CD14-positive monocyte (primary cell): ENCODE measurements at regions of chr17 and their contacts with region 1.

Region 1: GRCh38 chr17:76726231-76726775 is at the start of gene JMJD6:
- DNase-seq: peak; percentile 91 to 97 (median 94)
- H3K4me3 ChIP-seq: peak within 1 kb of the TSS; percentile 91 to 97 (median 92)
- H3K4me3 Mint-ChIP-seq: peak within 1 kb of the TSS; percentile 92 to 95
- H3K27ac ChIP-seq: peak within 1 kb of the TSS; percentile 98
- H3K27ac Mint-ChIP-seq: peak within 1 kb of the TSS; percentile 94 to 98 (median 97)
- H3K4me1 ChIP-seq: peaks cover 28 to 32% of the 10 kb centered on the region in 2 donors
- H3K4me1 Mint-ChIP-seq: peaks cover 37% of the 10 kb centered on the region
- H3K27me3 ChIP-seq: no peaks in the 10 kb centered on the region
- H3K27me3 Mint-ChIP-seq: peaks cover 0 to 2% (median 0%) of the 10 kb centered on the region in 3 donors
- CTCF ChIP-seq: no peak
- polyA plus RNA-seq, gene JMJD6: 24.6 to 75.0 (median 26.2) TPM

Region 2: GRCh38 chr17:76671123-76671911 is 55.0 kb before region 1 on chr17:
- intact Hi-C with region 1: loop called (anchors 5 to 10 kb)
- DNase-seq: peak; percentile 99 to 100 (median 100)
- H3K4me3 ChIP-seq: peak overlapping the region; percentile 66 to 90 (median 87)
- H3K4me3 Mint-ChIP-seq: peak overlapping the region; percentile 81 to 94
- H3K27ac ChIP-seq: peak overlapping the region; percentile 64 to 86
- H3K27ac Mint-ChIP-seq: peak overlapping the region; percentile 82 to 96 (median 92)
- H3K4me1 ChIP-seq: peaks cover 12 to 15% of the 10 kb centered on the region in 2 donors
- H3K4me1 Mint-ChIP-seq: peaks cover 18% of the 10 kb centered on the region
- H3K27me3 ChIP-seq: no peaks in the 10 kb centered on the region
- H3K27me3 Mint-ChIP-seq: peaks cover 4 to 7% (median 7%) of the 10 kb centered on the region in 3 donors
- CTCF ChIP-seq: no peak

Region 3: GRCh38 chr17:76714822-76715495 is 11.3 kb before region 1 on chr17:
- intact Hi-C with region 1: loop called in 1 of 2 experiments (anchors 1 kb)
- DNase-seq: peak; percentile 50 to 73 (median 68)
- H3K4me3 ChIP-seq: peak overlapping the region in 1 of 3 experiments; percentile 45
- H3K4me3 Mint-ChIP-seq: peak overlapping the region; percentile 61 to 78
- H3K27ac ChIP-seq: peak overlapping the region; percentile 88 to 90
- H3K27ac Mint-ChIP-seq: peak overlapping the region; percentile 94 to 98 (median 96)
- H3K4me1 ChIP-seq: peaks cover 40% of the 10 kb centered on the region in 2 donors
- H3K4me1 Mint-ChIP-seq: peaks cover 36% of the 10 kb centered on the region
- H3K27me3 ChIP-seq: peaks cover 8 to 9% of the 10 kb centered on the region in 2 donors
- H3K27me3 Mint-ChIP-seq: peaks cover 10 to 17% (median 11%) of the 10 kb centered on the region in 3 donors
- CTCF ChIP-seq: peak; percentile 98

Region 4: GRCh38 chr17:76737082-76737675 is 10.9 kb after region 1 on chr17 and contains the start of gene SRSF2:
- intact Hi-C with region 1: loop called (anchors 1 kb)
- DNase-seq: peak; percentile 95 to 98 (median 98)
- H3K4me3 ChIP-seq: peak within 1 kb of the TSS; percentile 95 to 100 (median 97)
- H3K4me3 Mint-ChIP-seq: peak within 1 kb of the TSS; percentile 98 to 99
- H3K27ac ChIP-seq: peak within 1 kb of the TSS; percentile 96 to 99
- H3K27ac Mint-ChIP-seq: peak within 1 kb of the TSS; percentile 98 to 100 (median 99)
- H3K4me1 ChIP-seq: peaks cover 34 to 45% of the 10 kb centered on the region in 2 donors
- H3K4me1 Mint-ChIP-seq: peaks cover 40% of the 10 kb centered on the region
- H3K27me3 ChIP-seq: no peaks in the 10 kb centered on the region
- H3K27me3 Mint-ChIP-seq: peaks cover 0 to 2% (median 0%) of the 10 kb centered on the region in 3 donors
- CTCF ChIP-seq: no peak
- polyA plus RNA-seq, gene SRSF2: 124 to 386 (median 125) TPM